HepG2 (cell line): ENCODE measurements at regions of chr13 and their contacts with region 1.

Region 1: DNA sequence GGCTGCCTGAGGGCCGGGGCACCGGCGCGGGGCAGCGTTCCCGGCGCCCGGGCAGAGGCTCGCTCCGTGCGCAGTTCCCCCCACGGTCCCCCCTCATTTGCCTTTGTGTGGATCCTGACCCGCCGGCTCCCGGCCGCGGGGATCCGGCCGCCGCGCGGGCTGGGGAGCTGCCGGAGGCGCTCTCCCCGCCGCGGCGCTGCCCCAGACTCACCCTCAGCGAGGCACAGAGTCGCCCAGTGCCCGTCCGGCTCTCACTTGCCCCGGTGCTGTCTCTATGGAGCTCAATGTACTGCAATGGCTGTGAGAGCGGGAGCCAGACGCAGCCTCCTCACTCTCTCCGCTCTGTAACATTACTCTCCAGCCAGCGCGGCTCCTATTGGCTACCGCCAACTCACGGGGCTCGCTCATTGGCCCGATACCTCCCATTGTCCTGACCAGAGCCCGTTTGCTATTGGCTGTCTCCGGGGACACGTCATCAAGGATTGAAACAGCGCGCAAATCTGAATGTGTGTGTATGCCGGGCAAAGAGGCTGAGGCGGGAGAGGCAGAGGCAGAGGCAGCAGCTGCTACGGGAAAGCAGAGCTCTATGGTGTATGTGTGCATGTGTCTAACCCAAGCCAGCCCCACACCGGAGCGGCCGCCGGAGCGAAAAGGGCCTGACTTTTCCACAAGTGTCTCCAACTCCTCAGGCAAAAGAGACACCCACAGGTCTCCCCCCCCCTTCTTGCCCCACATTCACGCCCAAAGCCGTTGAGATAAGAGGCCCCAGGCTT is at the start of gene HMGB1:
- DNase-seq: peak; percentile 98
- ATAC-seq: peak; percentile 97
- H3K4me3 ChIP-seq: peak within 1 kb of the TSS; percentile 74 to 92 (median 86)
- H3K27ac ChIP-seq: peak within 1 kb of the TSS; percentile 99
- H3K4me1 ChIP-seq: peaks cover 27% of the 10 kb centered on the region
- H3K27me3 ChIP-seq: no peaks in the 10 kb centered on the region; a peak in 2 of 5 replicates
- CTCF ChIP-seq: no peak
- EP300 ChIP-seq: no peak
- POLR2A ChIP-seq: peak; percentile 85 to 94
- RAD21 ChIP-seq: peak; percentile 46; the same call in 1 of the 2 replicates
- total RNA-seq, gene HMGB1: 584 and 878 TPM in 2 replicates

Region 2: DNA sequence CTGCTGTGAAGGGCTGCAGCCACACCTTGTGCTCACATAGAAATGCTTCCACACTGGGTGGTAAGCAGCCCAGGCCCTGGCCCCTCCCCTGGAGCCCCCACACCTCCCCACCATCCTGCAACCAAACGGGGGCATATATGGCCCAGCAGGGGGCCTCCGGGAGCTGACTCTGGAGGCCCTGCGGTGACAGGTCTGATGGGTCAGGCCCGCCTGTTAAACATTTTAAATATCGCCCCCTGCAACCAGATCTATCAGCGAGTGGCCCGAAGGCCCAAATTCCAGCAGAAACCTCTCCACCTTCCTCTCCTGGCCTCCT is 110.4 kb before region 1 on chr13:
- CTCF ChIA-PET with region 1: no interaction called
- POLR2A ChIA-PET with region 1: no interaction called
- in situ Hi-C with region 1: no loop called
- intact Hi-C with region 1: loop called (anchors 1 kb)
- DNase-seq: peak; percentile 49
- ATAC-seq: peak; percentile 99
- H3K4me3 ChIP-seq: no peak overlapping the region; a peak in 1 of 6 replicates
- H3K27ac ChIP-seq: no peak overlapping the region
- H3K4me1 ChIP-seq: peaks cover 10% of the 10 kb centered on the region
- H3K27me3 ChIP-seq: peaks cover 0 to 2% of the 10 kb centered on the region in 2 experiments; a peak in 1 of 5 replicates
- CTCF ChIP-seq: peak; percentile 80
- EP300 ChIP-seq: no peak
- POLR2A ChIP-seq: no peak
- RAD21 ChIP-seq: peak; percentile 60

Region 3: DNA sequence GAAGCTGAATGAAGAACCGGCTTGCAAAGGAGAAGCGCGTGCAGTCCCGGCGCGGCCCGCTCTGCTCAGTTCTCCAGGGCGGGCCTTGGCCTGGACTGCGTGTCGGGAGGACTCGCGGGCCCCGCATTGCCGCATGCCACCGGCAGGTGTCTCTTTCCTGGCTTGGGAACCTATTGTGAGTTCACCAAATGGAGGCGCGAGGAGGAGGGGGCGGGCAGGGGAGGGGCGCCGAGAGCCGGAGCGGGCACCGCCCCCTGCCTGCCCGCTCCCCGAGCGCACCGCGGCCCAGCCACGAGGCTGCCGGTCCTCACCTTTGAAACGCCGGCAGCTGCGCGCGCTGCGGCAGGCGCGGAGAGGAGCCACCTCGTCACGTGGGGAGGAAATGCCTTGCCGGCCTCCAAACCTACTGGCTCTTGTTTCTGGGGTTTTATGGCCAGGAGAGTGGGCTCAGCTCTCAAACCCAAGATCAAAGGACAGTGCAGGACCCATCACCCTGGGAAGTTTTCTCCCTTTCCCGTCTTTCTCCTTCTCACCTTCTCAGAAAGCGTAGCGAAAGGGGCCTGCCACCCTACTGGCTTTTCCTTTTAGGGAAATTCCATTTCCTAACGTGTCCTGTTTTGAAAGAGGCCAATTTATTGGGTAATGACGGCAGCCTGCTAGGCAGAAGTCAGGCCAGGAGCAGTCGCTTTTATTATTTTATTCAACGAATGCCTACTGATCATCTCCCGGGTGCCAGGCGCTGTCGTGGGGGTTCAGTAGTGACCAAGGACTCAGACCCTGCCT is 57.3 kb before region 1 on chr13:
- CTCF ChIA-PET with region 1: interaction called, 4 read pairs
- POLR2A ChIA-PET with region 1: no interaction called
- in situ Hi-C with region 1: no loop called
- intact Hi-C with region 1: loop called (anchors 5 kb)
- DNase-seq: peak; percentile 86
- ATAC-seq: peak; percentile 97
- H3K4me3 ChIP-seq: peak overlapping the region in 2 of 3 experiments; percentile 34 to 61; a peak in 2 of 6 replicates
- H3K27ac ChIP-seq: no peak overlapping the region
- H3K4me1 ChIP-seq: peaks cover 36% of the 10 kb centered on the region
- H3K27me3 ChIP-seq: peaks cover 1 to 26% of the 10 kb centered on the region in 2 experiments; a peak in 3 of 5 replicates
- CTCF ChIP-seq: peak; percentile 80
- EP300 ChIP-seq: no peak
- POLR2A ChIP-seq: no peak
- RAD21 ChIP-seq: peak; percentile 47; the same call in 1 of the 2 replicates

Region 4: GRCh38 chr13:30673669-30674521 is 208.1 kb after region 1 on chr13:
- CTCF ChIA-PET with region 1: no interaction called
- POLR2A ChIA-PET with region 1: no interaction called
- in situ Hi-C with region 1: no loop called
- intact Hi-C with region 1: loop called (anchors 2 kb)
- DNase-seq: peak; percentile 76
- ATAC-seq: peak; percentile 95
- H3K4me3 ChIP-seq: peak overlapping the region; percentile 58 to 73 (median 68)
- H3K27ac ChIP-seq: peak overlapping the region; percentile 65
- H3K4me1 ChIP-seq: peaks cover 27% of the 10 kb centered on the region
- H3K27me3 ChIP-seq: no peaks in the 10 kb centered on the region
- CTCF ChIP-seq: peak; percentile 79
- EP300 ChIP-seq: peak in 1 of 2 experiments; percentile 67; a peak in 2 of 4 replicates
- POLR2A ChIP-seq: peak; percentile 38 to 52; a peak in 2 of 4 replicates
- RAD21 ChIP-seq: peak; percentile 84